ENCODE measurements at regions of chr2 and their contacts with region 1.

Region 1: GRCh38 chr2:135985018-135985825 is at the start of gene DARS1:
- DNase-seq: peak; percentile 67 to 89 (median 78)
- ATAC-seq: peak; percentile 92
- H3K4me3 ChIP-seq: peak within 1 kb of the TSS; percentile 82
- H3K4me3 Mint-ChIP-seq: peak within 1 kb of the TSS; percentile 90 to 99 (median 97)
- H3K27ac ChIP-seq: peak within 1 kb of the TSS; percentile 95
- H3K27ac Mint-ChIP-seq: peak within 1 kb of the TSS; percentile 98 to 99 (median 98)
- H3K4me1 ChIP-seq: peaks cover 0 to 24% of the 10 kb centered on the region in 2 donors
- H3K4me1 Mint-ChIP-seq: peaks cover 9 to 66% (median 54%) of the 10 kb centered on the region in 7 donors
- H3K27me3 ChIP-seq: no peaks in the 10 kb centered on the region
- H3K27me3 Mint-ChIP-seq: no peaks in the 10 kb centered on the region
- total RNA-seq, gene DARS1: 45.3 to 140 (median 63.4) TPM

Region 2: DNA sequence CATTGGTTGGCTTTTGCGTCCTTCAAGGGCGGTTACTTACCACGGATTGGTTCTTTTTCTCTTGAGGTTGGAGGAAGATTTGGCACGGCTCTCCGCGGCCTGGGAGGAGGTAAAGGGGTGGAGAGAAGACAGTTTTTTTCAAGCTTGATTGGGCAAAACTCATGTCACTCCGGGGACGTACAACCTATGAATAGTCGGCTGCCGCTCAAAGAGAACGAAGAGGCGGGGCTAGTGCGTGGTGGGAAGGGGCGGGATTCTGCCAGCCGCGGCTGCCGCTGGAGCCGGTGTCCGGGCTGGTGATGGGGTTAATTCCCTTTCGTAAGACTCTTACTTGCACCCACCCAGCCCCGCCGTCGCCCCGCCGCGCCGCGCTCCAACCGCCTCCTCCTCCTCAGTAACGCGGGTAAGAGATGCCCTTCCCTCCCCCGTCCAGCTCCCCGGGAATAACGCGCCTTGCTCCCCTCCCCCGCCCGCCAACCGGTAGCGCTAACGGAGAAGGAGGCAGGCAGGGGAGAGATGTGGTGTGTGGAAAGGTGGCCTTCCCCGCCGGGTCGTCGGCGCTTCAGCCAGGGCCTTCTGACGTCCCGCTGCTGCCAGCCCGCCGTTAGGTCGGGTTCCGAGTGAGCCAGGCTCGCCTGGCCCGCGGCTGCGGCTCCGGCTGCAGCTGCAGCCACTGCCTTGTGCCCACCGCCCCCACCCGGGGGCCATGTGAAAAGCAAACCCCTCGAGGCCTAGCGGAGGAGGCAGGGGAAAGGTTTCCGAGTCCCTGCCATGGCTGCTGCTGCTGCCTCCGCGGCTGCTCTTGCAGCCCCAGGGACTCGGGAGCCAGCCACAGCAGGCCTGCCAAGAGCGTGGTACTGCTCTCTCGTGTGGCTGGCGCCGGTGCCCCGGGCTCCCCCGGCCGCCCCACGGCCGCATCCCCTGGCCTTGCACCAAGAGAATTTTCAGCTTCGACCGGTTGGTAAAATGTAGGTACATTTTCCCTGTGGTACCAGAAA is 453.7 kb before region 1 on chr2 and contains the start of gene R3HDM1:
- CTCF ChIA-PET with region 1: no interaction called
- POLR2A ChIA-PET with region 1: no interaction called
- intact Hi-C with region 1: loop called (anchors 2 to 10 kb)
- DNase-seq: peak in 8 of 9 donors; percentile 71 to 99 (median 98)
- ATAC-seq: peak; percentile 89
- H3K4me3 ChIP-seq: peak within 1 kb of the TSS; percentile 83
- H3K4me3 Mint-ChIP-seq: no peak within 1 kb of the TSS
- H3K27ac ChIP-seq: peak within 1 kb of the TSS; percentile 84
- H3K27ac Mint-ChIP-seq: peak within 1 kb of the TSS in 7 of 9 donors; percentile 36 to 81 (median 67)
- H3K4me1 ChIP-seq: peaks cover 4 to 21% of the 10 kb centered on the region in 2 donors
- H3K4me1 Mint-ChIP-seq: peaks cover 10 to 39% (median 34%) of the 10 kb centered on the region in 7 donors
- H3K27me3 ChIP-seq: no peaks in the 10 kb centered on the region
- H3K27me3 Mint-ChIP-seq: no peaks in the 10 kb centered on the region
- total RNA-seq, gene R3HDM1: 35.0 to 58.2 (median 47.0) TPM

Region 3: GRCh38 chr2:135913727-135914365 is 71.4 kb before region 1 on chr2:
- CTCF ChIA-PET with region 1: interaction called, 3 read pairs
- POLR2A ChIA-PET with region 1: no interaction called
- intact Hi-C with region 1: loop called (anchors 1 to 2 kb)
- DNase-seq: peak in 7 of 9 donors; percentile 36 to 67 (median 60)
- ATAC-seq: peak; percentile 63
- H3K4me3 ChIP-seq: no peak overlapping the region
- H3K4me3 Mint-ChIP-seq: no peak overlapping the region
- H3K27ac ChIP-seq: no peak overlapping the region
- H3K27ac Mint-ChIP-seq: peak overlapping the region in 6 of 9 donors; percentile 34 to 82 (median 55)
- H3K4me1 ChIP-seq: no peaks in the 10 kb centered on the region
- H3K4me1 Mint-ChIP-seq: peaks cover 0 to 12% (median 3%) of the 10 kb centered on the region in 7 donors
- H3K27me3 ChIP-seq: no peaks in the 10 kb centered on the region
- H3K27me3 Mint-ChIP-seq: no peaks in the 10 kb centered on the region

Region 4: DNA sequence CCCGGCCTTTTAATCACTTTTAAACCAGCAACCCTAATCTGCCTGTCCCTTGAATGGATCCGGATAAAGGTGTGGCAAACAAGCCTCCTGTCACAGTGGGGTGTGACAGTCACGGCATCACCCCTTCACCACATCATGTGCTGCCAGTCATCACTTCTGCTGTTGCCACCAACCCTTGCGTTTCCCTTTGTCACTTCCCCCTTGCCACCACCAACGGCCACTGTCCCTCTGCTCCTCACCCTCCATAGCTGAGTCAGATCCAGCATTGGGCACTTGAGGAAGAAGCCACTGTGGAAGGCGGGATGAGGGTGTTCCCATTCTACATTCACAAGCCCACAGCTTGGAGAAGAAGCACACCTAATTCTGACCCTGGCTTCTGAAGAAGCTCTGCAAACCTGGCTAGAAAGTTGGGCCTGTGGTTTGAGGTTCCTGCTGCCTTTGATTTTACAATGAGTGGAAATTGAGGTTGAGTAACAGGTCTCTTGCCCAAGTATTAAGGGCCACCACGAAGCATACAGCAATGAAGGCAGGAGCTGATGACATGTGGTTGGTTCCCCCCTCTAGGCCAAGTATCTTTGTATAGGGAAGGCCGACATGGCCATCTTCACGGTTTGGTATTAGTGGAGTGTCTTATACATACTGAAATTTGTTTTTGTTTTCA is 23.1 kb after region 1 on chr2:
- CTCF ChIA-PET with region 1: interaction called, 3 read pairs
- POLR2A ChIA-PET with region 1: interaction called, 3 read pairs
- intact Hi-C with region 1: loop called in 1 of 2 experiments (anchors 2 kb)
- DNase-seq: peak; percentile 20 to 53 (median 33)
- ATAC-seq: peak; percentile 94
- H3K4me3 ChIP-seq: no peak overlapping the region
- H3K4me3 Mint-ChIP-seq: peak overlapping the region; percentile 7 to 77 (median 34)
- H3K27ac ChIP-seq: no peak overlapping the region
- H3K27ac Mint-ChIP-seq: peak overlapping the region; percentile 60 to 94 (median 75)
- H3K4me1 ChIP-seq: peaks cover 11 to 20% of the 10 kb centered on the region in 2 donors
- H3K4me1 Mint-ChIP-seq: peaks cover 17 to 48% (median 30%) of the 10 kb centered on the region in 7 donors
- H3K27me3 ChIP-seq: no peaks in the 10 kb centered on the region
- H3K27me3 Mint-ChIP-seq: no peaks in the 10 kb centered on the region

Region 5: GRCh38 chr2:136238286-136239078 is 253.3 kb after region 1 on chr2:
- CTCF ChIA-PET with region 1: no interaction called
- POLR2A ChIA-PET with region 1: interaction called, 5 read pairs
- intact Hi-C with region 1: loop called in 1 of 2 experiments (anchors 5 kb)
- DNase-seq: peak in 8 of 9 donors; percentile 33 to 75 (median 60)
- ATAC-seq: peak; percentile 84
- H3K4me3 ChIP-seq: no peak overlapping the region
- H3K4me3 Mint-ChIP-seq: peak overlapping the region; percentile 26 to 64 (median 48)
- H3K27ac ChIP-seq: peak overlapping the region; percentile 25
- H3K27ac Mint-ChIP-seq: peak overlapping the region; percentile 84 to 95 (median 90)
- H3K4me1 ChIP-seq: peaks cover 31 to 36% of the 10 kb centered on the region in 2 donors
- H3K4me1 Mint-ChIP-seq: peaks cover 32 to 60% (median 54%) of the 10 kb centered on the region in 7 donors
- H3K27me3 ChIP-seq: no peaks in the 10 kb centered on the region
- H3K27me3 Mint-ChIP-seq: no peaks in the 10 kb centered on the region

Region 6: GRCh38 chr2:136384531-136385303 is 399.5 kb after region 1 on chr2:
- CTCF ChIA-PET with region 1: interaction called, 5 read pairs
- POLR2A ChIA-PET with region 1: interaction called, 3 read pairs
- intact Hi-C with region 1: loop called in 1 of 2 experiments (anchors 1 kb)
- DNase-seq: peak in 7 of 9 donors; percentile 63 to 79 (median 69)
- ATAC-seq: peak; percentile 78
- H3K4me3 ChIP-seq: no peak overlapping the region
- H3K4me3 Mint-ChIP-seq: peak overlapping the region in 6 of 10 donors; percentile 4 to 73 (median 30)
- H3K27ac ChIP-seq: no peak overlapping the region
- H3K27ac Mint-ChIP-seq: peak overlapping the region; percentile 37 to 98 (median 92)
- H3K4me1 ChIP-seq: peaks cover 22 to 25% of the 10 kb centered on the region in 2 donors
- H3K4me1 Mint-ChIP-seq: peaks cover 21 to 46% (median 40%) of the 10 kb centered on the region in 7 donors
- H3K27me3 ChIP-seq: no peaks in the 10 kb centered on the region
- H3K27me3 Mint-ChIP-seq: no peaks in the 10 kb centered on the region

Region 7: DNA sequence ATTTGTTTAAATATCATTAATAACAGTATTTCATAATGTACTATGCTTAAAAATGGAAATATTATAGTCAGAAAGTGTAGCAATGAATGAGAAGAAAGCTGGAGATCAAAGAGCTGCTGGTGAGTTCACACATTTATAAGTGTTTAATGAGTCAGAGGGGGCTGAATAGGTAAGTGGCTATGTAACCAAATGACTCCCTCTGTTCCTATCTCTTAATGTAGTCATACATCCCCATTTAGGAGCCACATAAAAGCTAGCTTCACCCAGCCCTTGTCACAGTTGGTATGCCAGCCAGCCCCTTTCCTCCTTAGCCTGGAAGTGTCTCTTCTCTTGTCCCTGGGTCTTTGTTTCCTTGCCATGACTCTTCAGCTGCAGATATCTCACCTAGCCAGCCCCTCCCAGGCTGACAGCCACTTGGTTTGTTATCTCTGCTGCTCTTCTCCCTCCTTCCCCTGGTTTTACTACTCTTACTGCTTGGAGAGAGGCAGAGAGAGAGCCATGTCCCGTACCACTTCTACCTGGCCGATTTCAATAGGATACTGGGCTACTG is 1540.5 kb after region 1 on chr2:
- CTCF ChIA-PET with region 1: no interaction called
- POLR2A ChIA-PET with region 1: no interaction called
- intact Hi-C with region 1: no loop called
- DNase-seq: no peak
- ATAC-seq: no peak
- H3K4me3 ChIP-seq: no peak overlapping the region
- H3K4me3 Mint-ChIP-seq: no peak overlapping the region
- H3K27ac ChIP-seq: no peak overlapping the region
- H3K27ac Mint-ChIP-seq: no peak overlapping the region
- H3K4me1 ChIP-seq: no peaks in the 10 kb centered on the region
- H3K4me1 Mint-ChIP-seq: no peaks in the 10 kb centered on the region
- H3K27me3 ChIP-seq: no peaks in the 10 kb centered on the region
- H3K27me3 Mint-ChIP-seq: no peaks in the 10 kb centered on the region

Measured in naive thymus-derived CD4-positive, alpha-beta T cell (primary cell).